ENCODE measurements at regions of chr22 and their contacts with region 1.

Region 1: GRCh38 chr22:36461669-36462649 is 19.5 kb downstream of the TXN2 start:
- DNase-seq: peak; percentile 50 to 89
- ATAC-seq: peak; percentile 7 to 45
- H3K4me3 ChIP-seq: no peak overlapping the region
- H3K27ac ChIP-seq: peak overlapping the region; percentile 91 to 98 (median 94)
- H3K4me1 ChIP-seq: peaks cover 58 to 68% of the 10 kb centered on the region in 2 donors
- H3K27me3 ChIP-seq: no peaks in the 10 kb centered on the region
- CTCF ChIP-seq: no peak
- POLR2A ChIP-seq: peak in 1 of 2 donors; percentile 21

Region 2: GRCh38 chr22:35611891-35612576 is 849.9 kb before region 1 on chr22:
- in situ Hi-C with region 1: no loop called
- intact Hi-C with region 1: loop called (anchors 10 kb)
- DNase-seq: peak; percentile 69 to 94
- ATAC-seq: peak; percentile 57 to 68
- H3K4me3 ChIP-seq: peak overlapping the region in 1 of 4 donors; percentile 56
- H3K27ac ChIP-seq: peak overlapping the region; percentile 92 to 97 (median 97)
- H3K4me1 ChIP-seq: peaks cover 66 to 75% of the 10 kb centered on the region in 2 donors
- H3K27me3 ChIP-seq: no peaks in the 10 kb centered on the region
- CTCF ChIP-seq: no peak
- POLR2A ChIP-seq: peak; percentile 36 to 75

Region 3: GRCh38 chr22:36009085-36009484 is 452.9 kb before region 1 on chr22:
- in situ Hi-C with region 1: no loop called
- intact Hi-C with region 1: no loop called
- DNase-seq: no peak
- ATAC-seq: no peak
- H3K4me3 ChIP-seq: no peak overlapping the region
- H3K27ac ChIP-seq: no peak overlapping the region
- H3K4me1 ChIP-seq: peaks cover 17 to 28% of the 10 kb centered on the region in 2 donors
- H3K27me3 ChIP-seq: no peaks in the 10 kb centered on the region
- CTCF ChIP-seq: no peak
- POLR2A ChIP-seq: no peak

Region 4: DNA sequence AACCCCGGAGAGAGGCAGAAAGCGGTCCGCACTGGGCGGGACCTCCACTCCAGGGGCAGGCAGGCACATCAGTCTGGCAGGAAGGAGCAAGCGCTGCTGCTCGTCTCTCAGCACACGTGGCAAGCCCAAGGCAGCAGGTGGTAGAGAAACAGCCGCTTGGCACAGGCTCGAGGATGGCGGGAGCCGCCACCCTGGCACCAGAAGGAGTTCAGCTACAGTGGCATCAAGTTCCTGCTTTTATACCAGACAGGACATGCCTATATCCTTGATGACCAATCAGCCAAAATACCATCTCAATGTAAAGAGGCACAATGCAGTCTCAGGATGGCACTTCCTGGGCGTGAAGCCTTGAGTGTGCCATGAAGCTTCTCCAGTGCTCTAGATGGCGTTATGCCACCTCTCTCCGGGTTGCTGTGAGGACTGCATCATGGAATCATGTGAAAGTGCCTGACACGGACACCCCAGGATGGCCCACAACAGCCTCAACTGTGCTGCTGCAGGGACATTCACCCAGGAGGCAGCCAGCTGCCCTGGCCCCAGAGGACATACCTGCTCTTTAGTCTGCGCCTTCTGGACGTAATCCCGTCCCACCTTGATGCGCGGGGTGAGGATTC is 144.2 kb before region 1 on chr22:
- in situ Hi-C with region 1: no loop called
- intact Hi-C with region 1: loop called (anchors 5 kb)
- DNase-seq: peak; percentile 63 to 87
- ATAC-seq: peak; percentile 86 to 96
- H3K4me3 ChIP-seq: no peak overlapping the region
- H3K27ac ChIP-seq: peak overlapping the region; percentile 82 to 84 (median 84)
- H3K4me1 ChIP-seq: peaks cover 4 to 16% of the 10 kb centered on the region in 2 donors
- H3K27me3 ChIP-seq: no peaks in the 10 kb centered on the region
- CTCF ChIP-seq: no peak
- POLR2A ChIP-seq: peak in 1 of 2 donors; percentile 17

Region 5: GRCh38 chr22:36329254-36330078 is 132.5 kb before region 1 on chr22:
- in situ Hi-C with region 1: no loop called
- intact Hi-C with region 1: loop called (anchors 5 kb)
- DNase-seq: no peak
- ATAC-seq: peak; percentile 4 to 11
- H3K4me3 ChIP-seq: peak overlapping the region in 2 of 4 donors; percentile 5 to 15
- H3K27ac ChIP-seq: peak overlapping the region; percentile 82 to 84 (median 84)
- H3K4me1 ChIP-seq: peaks cover 85 to 86% of the 10 kb centered on the region in 2 donors
- H3K27me3 ChIP-seq: no peaks in the 10 kb centered on the region
- CTCF ChIP-seq: no peak
- POLR2A ChIP-seq: peak in 1 of 2 donors; percentile 13

Region 6: GRCh38 chr22:36425977-36426523 is 35.9 kb before region 1 on chr22:
- in situ Hi-C with region 1: no loop called
- intact Hi-C with region 1: no loop called
- DNase-seq: peak; percentile 24 to 29
- ATAC-seq: no peak
- H3K4me3 ChIP-seq: no peak overlapping the region
- H3K27ac ChIP-seq: peak overlapping the region; percentile 29 to 54 (median 40)
- H3K4me1 ChIP-seq: peaks cover 0 to 6% of the 10 kb centered on the region in 2 donors
- H3K27me3 ChIP-seq: no peaks in the 10 kb centered on the region
- CTCF ChIP-seq: no peak
- POLR2A ChIP-seq: no peak